HEK293 (cell line): ENCODE measurements at regions of chr22 and their contacts with region 1.

Region 1: GRCh38 chr22:19717691-19718455 is 3.6 kb downstream of the SEPTIN5 start:
- H3K4me3 ChIP-seq: peak overlapping the region; percentile 44
- H3K27ac ChIP-seq: no peak overlapping the region; the same call in 1 of the 2 replicates
- H3K4me1 ChIP-seq: no peaks in the 10 kb centered on the region; the same call in 1 of the 2 replicates
- CTCF ChIP-seq: peak; percentile 80; the same call in 1 of the 2 replicates

Region 2: GRCh38 chr22:19679522-19680101 is 38.3 kb before region 1 on chr22:
- CTCF ChIA-PET with region 1: interaction called, 11 read pairs
- POLR2A ChIA-PET with region 1: no interaction called
- H3K4me3 ChIP-seq: no peak overlapping the region
- H3K27ac ChIP-seq: no peak overlapping the region
- H3K4me1 ChIP-seq: no peaks in the 10 kb centered on the region
- CTCF ChIP-seq: no peak

Region 3: GRCh38 chr22:19806213-19807145 is 88.6 kb after region 1 on chr22:
- CTCF ChIA-PET with region 1: no interaction called
- POLR2A ChIA-PET with region 1: no interaction called
- H3K4me3 ChIP-seq: no peak overlapping the region
- H3K27ac ChIP-seq: no peak overlapping the region; the same call in 1 of the 2 replicates
- H3K4me1 ChIP-seq: peaks cover 3% of the 10 kb centered on the region
- CTCF ChIP-seq: no peak